H1 (cell line): ENCODE measurements at regions of chr1 and their contacts with region 1.

Region 1: DNA sequence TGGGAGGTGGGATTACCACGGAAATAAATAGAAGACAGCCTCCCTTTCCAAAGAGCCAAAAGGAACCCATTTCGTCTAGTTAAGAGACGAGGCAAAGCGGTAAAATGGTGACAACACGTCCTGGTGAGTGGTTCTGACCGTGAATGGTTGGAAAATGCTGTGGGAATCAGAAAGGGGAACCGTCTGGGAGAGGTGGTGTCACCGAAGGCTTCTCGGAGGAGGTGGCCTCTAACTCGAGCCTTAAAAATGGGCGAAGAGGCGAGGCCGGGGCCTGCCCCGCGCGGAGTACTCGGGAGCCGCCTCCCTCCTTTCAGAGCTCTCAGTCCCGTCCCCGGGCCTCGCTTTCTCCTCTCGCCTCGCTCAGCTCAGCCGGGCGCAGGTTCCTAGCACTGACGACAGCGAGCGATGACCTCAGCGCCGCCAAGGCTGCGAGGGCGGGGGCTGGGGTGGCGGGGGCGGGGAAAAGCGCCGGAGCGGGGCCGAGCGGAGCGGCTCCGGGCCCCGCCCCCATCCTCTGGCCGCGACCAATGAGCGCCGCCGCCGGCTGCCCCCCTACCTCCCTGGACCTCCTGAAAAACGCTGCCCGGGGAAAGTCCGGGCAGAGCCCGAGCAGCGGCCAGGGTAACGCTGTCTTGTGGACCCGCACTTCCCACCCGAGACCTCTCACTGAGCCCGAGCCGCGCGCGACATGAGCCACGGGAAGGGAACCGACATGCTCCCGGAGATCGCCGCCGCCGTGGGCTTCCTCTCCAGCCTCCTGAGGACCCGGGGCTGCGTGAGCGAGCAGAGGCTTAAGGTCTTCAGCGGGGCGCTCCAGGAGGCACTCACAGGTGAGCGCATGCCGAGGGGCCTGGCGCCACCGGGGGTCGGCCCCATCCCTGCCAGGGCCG is at the start of gene BTG2:
- DNase-seq: peak; percentile 70 to 85
- H3K4me3 ChIP-seq: peak within 1 kb of the TSS; percentile 74 to 92 (median 78)
- H3K27ac ChIP-seq: no peak within 1 kb of the TSS
- H3K4me1 ChIP-seq: peaks cover 14 to 33% (median 18%) of the 10 kb centered on the region in 4 experiments
- H3K27me3 ChIP-seq: peaks cover 41 to 86% (median 77%) of the 10 kb centered on the region in 4 experiments
- CTCF ChIP-seq: no peak
- EP300 ChIP-seq: no peak
- POLR2A ChIP-seq: peak; percentile 83 to 85
- RAD21 ChIP-seq: no peak
- total RNA-seq, gene BTG2: 4.1 and 4.8 TPM in 2 replicates

Region 2: DNA sequence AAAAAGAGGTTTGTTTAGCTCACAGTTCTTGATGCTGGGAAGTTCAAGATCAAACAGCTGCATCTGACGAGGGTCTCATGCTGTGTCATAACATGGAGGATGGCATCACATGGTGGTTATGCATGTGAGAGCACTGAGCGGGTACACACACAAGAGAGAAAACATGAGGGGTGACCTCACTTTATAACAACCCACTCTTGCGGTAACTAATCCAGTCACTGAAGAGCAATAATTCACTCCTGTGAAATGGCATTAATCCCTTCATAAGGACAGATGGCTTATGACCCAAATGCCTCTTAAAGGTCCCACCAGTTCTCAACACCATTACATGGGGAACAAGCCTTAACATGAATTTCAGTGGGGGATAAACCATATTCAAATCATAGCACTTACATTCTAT is 52.5 kb before region 1 on chr1:
- CTCF ChIA-PET with region 1: no interaction called
- POLR2A ChIA-PET with region 1: no interaction called
- DNase-seq: no peak
- H3K4me3 ChIP-seq: no peak overlapping the region
- H3K27ac ChIP-seq: no peak overlapping the region
- H3K4me1 ChIP-seq: no peaks in the 10 kb centered on the region
- H3K27me3 ChIP-seq: no peaks in the 10 kb centered on the region
- CTCF ChIP-seq: no peak
- EP300 ChIP-seq: no peak
- POLR2A ChIP-seq: no peak
- RAD21 ChIP-seq: no peak

Region 3: GRCh38 chr1:203273206-203273868 is 31.8 kb before region 1 on chr1:
- CTCF ChIA-PET with region 1: interaction called, 123 read pairs
- POLR2A ChIA-PET with region 1: no interaction called
- DNase-seq: peak; percentile 46 to 94
- H3K4me3 ChIP-seq: peak overlapping the region in 3 of 4 experiments; percentile 37 to 57 (median 52); a peak in 6 of 8 replicates
- H3K27ac ChIP-seq: no peak overlapping the region
- H3K4me1 ChIP-seq: peaks cover under 1 to 9% (median 7%) of the 10 kb centered on the region in 4 experiments; a peak in 6 of 7 replicates
- H3K27me3 ChIP-seq: peaks cover 0 to 31% (median 10%) of the 10 kb centered on the region in 4 experiments; a peak in 5 of 7 replicates
- CTCF ChIP-seq: peak; percentile 91 to 94 (median 92)
- EP300 ChIP-seq: no peak
- POLR2A ChIP-seq: no peak
- RAD21 ChIP-seq: peak; percentile 87 to 88

Region 4: DNA sequence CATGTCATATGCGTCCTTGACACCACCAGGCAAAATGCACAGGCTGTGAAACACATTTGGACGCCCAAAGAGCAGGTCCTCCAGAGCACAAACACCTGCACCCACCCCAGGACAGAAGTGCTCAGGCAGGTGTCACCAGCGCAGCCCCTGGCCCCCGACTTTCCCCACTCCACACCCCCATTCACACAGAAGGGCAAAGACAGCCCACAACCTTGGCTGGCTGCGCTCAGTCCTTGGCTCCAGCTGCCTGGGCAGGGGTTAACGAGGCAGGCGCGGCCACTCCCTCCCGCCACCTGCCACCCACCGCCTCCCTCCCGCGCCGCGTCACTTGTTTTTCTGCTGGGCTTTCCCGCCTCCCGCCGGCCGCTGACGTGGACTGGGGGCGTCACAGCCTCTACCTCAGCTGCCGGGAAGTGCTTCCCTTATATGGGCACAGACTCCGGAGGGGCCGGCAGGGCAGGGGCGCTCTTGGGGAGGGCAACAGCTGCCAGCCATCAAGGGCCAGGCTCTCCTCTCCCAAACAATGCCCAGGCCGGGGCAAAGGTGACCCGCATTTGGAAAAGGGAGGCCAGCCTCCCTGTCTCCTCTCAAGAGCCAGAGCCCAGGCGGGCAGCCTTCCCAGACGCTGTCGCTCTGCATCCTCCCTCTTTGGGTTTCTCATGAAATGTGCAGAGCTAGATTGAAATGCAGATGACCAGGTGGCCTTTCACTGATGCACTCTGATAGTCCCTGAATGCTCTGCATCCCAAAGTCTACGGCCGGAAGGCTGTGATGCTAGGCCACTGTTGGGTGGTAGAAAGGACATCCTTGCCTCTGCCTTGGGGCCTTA is 14.7 kb before region 1 on chr1:
- CTCF ChIA-PET with region 1: interaction called, 17 read pairs
- POLR2A ChIA-PET with region 1: interaction called, 10 read pairs
- DNase-seq: peak; percentile 46 to 92
- H3K4me3 ChIP-seq: peak overlapping the region; percentile 23 to 53 (median 42); a peak in 7 of 8 replicates
- H3K27ac ChIP-seq: peak overlapping the region; percentile 49
- H3K4me1 ChIP-seq: peaks cover 15 to 34% (median 22%) of the 10 kb centered on the region in 4 experiments
- H3K27me3 ChIP-seq: peaks cover 0 to 23% (median 13%) of the 10 kb centered on the region in 4 experiments; a peak in 4 of 7 replicates
- CTCF ChIP-seq: 0 out of 4 replicates have a peak, but pooled peaks of 1 of the 3 experiments have one; percentile 0
- EP300 ChIP-seq: peak in 1 of 2 experiments; percentile 94; a peak in 1 of 3 replicates
- POLR2A ChIP-seq: peak in 1 of 2 experiments; percentile 25; a peak in 2 of 3 replicates
- RAD21 ChIP-seq: no peak

Region 5: DNA sequence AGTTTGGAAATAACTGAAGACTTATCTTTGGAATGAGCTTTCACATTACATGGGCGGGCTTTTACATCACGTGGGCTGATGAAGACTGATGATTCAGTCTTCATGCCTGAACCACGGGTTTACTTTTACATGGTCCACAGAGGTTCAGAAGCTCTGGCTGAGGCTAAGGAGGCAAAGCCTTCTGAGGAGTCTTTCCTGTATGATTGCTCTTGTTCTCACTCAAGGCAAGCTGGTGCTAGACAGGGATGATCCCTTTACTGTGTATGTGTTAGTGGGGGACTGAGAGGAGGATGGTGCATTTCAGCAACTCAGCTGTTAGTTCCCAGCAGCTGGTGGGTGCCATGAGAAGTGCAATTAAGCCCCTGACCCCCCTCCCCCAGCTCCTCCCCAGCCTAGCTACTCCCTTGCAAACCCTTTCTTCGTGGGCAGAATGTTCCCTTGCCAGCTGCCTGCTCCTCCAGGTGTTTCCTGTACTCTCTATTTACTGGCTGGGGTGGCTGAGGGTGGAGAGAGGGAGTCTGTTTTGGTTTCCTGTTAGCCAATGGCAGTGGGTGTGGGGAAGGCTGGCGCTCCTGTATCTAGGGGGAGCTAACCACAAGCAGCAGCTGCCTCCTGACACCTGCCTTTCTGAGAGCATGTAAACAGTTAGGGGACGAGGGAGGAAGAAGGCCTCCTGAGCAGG is 15.6 kb after region 1 on chr1:
- CTCF ChIA-PET with region 1: interaction called, 101 read pairs
- POLR2A ChIA-PET with region 1: interaction called, 11 read pairs
- DNase-seq: peak in 1 of 2 experiments; percentile 60
- H3K4me3 ChIP-seq: no peak overlapping the region
- H3K27ac ChIP-seq: no peak overlapping the region
- H3K4me1 ChIP-seq: peaks cover 3 to 17% (median 11%) of the 10 kb centered on the region in 4 experiments
- H3K27me3 ChIP-seq: peaks cover 0 to 49% (median 17%) of the 10 kb centered on the region in 4 experiments; a peak in 6 of 7 replicates
- CTCF ChIP-seq: peak in 1 of 3 experiments; percentile 8; a peak in 1 of 4 replicates
- EP300 ChIP-seq: no peak
- POLR2A ChIP-seq: no peak
- RAD21 ChIP-seq: 0 out of 4 replicates have a peak, but pooled peaks of 1 of the 2 experiments have one; percentile 17

Region 6: DNA sequence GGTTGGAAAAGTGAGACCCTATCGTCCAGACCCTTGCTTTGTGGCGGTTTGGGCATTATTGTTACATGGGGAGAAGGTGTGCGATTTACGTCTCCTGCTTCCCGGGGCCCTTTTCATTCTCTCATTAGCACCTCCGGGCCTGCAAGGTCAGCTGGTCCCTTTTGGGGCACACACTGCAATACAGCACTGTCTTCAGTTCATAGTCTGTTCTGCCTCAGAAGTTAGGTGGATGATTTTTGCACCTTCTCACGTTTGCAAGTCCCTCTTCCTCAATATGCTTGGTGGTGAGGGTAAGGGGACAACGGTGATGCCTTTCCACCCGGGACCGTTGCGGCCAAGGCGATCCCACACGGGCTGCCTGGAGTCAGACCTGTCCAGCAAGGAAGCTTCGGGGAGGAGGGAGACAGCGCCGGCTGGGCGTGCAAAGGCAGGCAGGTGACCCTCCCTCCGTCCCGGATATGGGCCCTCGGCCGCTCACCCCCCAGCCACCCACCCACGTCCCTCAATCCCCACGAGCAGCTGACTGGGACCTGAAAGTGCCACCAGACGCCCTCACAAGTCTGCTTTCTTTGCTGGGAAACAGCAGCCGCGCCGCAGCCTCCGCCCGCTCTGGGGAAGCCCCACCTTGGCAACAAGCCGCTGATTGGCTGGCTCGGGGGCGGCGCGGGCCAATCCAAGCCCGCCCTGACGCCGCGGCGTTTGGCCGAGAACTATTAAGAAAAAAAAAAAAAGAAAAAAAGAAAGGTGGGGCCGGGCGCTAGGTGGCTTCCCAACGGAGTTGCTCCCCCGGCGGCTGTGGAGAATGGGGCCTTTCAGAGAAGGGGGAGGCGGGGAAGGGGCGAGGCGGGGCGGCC is 21.9 kb after region 1 on chr1:
- CTCF ChIA-PET with region 1: interaction called, 785 read pairs
- POLR2A ChIA-PET with region 1: interaction called, 11 read pairs
- DNase-seq: peak in 1 of 2 experiments; percentile 94
- H3K4me3 ChIP-seq: peak overlapping the region; percentile 41 to 64 (median 46); a peak in 7 of 8 replicates
- H3K27ac ChIP-seq: no peak overlapping the region
- H3K4me1 ChIP-seq: peaks cover 8 to 30% (median 21%) of the 10 kb centered on the region in 4 experiments
- H3K27me3 ChIP-seq: peaks cover 0 to 24% (median 16%) of the 10 kb centered on the region in 4 experiments; a peak in 4 of 7 replicates
- CTCF ChIP-seq: peak in 1 of 3 experiments; percentile 37; a peak in 2 of 4 replicates
- EP300 ChIP-seq: no peak
- POLR2A ChIP-seq: peak in 1 of 2 experiments; percentile 29; a peak in 1 of 3 replicates
- RAD21 ChIP-seq: 0 out of 4 replicates have a peak, but pooled peaks of 1 of the 2 experiments have one; percentile 5